MCF 10A (cell line): ENCODE measurements at regions of chr13 and their contacts with region 1.

Region 1: DNA sequence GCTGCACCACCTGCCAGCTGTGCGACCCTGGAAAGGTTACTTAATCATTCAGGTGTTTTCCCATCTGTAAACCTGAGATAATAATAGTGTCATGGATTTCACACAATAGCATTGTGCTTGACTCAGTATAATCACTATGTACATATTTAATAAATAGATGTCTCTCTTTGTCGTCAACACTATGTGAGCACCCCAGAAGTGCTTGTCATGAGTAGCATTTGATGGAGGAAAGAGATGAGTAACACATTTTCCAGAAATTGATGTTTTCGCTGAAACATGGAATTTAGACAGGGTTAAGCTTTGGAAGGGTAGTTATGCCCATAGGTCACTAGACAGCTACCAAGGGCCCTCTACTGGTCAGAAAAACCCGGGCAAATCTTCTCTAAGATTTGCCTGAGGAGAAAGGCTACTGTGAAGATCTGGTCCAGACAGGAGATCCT is 9.5 kb upstream of the MBNL2 start:
- DNase-seq: peak; percentile 75
- H3K4me3 Mint-ChIP-seq: no peak overlapping the region
- H3K27ac Mint-ChIP-seq: no peak overlapping the region
- H3K4me1 Mint-ChIP-seq: no peaks in the 10 kb centered on the region
- H3K27me3 Mint-ChIP-seq: no peaks in the 10 kb centered on the region
- CTCF ChIP-seq: peak; percentile 69

Region 2: GRCh38 chr13:97100821-97101220 is 111.8 kb before region 1 on chr13:
- CTCF ChIA-PET with region 1: interaction called, 478 read pairs
- POLR2A ChIA-PET with region 1: no interaction called
- intact Hi-C with region 1: no loop called
- DNase-seq: no peak
- H3K4me3 Mint-ChIP-seq: no peak overlapping the region
- H3K27ac Mint-ChIP-seq: no peak overlapping the region
- H3K4me1 Mint-ChIP-seq: no peaks in the 10 kb centered on the region
- H3K27me3 Mint-ChIP-seq: no peaks in the 10 kb centered on the region
- CTCF ChIP-seq: no peak

Region 3: GRCh38 chr13:97141564-97142005 is 71.0 kb before region 1 on chr13:
- CTCF ChIA-PET with region 1: interaction called, 20 read pairs
- POLR2A ChIA-PET with region 1: interaction called, 5 read pairs
- intact Hi-C with region 1: no loop called
- DNase-seq: peak; percentile 96
- H3K4me3 Mint-ChIP-seq: no peak overlapping the region
- H3K27ac Mint-ChIP-seq: peak overlapping the region; percentile 18
- H3K4me1 Mint-ChIP-seq: peaks cover 8% of the 10 kb centered on the region
- H3K27me3 Mint-ChIP-seq: peaks cover under 1% of the 10 kb centered on the region
- CTCF ChIP-seq: no peak

Region 4: DNA sequence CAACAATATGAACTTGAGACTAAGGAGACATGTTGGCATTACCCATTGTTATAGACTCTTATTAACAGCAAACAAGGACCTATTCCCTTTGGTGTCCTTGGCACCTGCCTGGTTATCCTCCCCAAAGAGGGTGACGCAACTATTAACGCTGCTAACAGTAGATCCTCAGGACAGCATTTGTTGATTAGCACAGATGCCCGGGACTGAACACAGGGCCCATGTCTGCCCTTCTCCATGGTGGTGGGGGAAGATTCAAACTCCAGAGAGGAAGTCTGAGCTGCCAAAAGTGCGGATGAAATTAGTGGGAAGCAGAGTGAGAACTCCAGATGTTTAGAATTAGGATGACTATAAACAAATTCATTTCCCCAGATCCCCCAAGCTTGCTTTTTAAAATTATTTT is 120.1 kb after region 1 on chr13:
- CTCF ChIA-PET with region 1: interaction called, 12 read pairs
- POLR2A ChIA-PET with region 1: no interaction called
- intact Hi-C with region 1: no loop called
- DNase-seq: no peak
- H3K4me3 Mint-ChIP-seq: no peak overlapping the region
- H3K27ac Mint-ChIP-seq: no peak overlapping the region
- H3K4me1 Mint-ChIP-seq: peaks cover 9% of the 10 kb centered on the region
- H3K27me3 Mint-ChIP-seq: no peaks in the 10 kb centered on the region
- CTCF ChIP-seq: no peak

Region 5: GRCh38 chr13:97359181-97360057 is 146.8 kb after region 1 on chr13:
- CTCF ChIA-PET with region 1: interaction called, 14 read pairs
- POLR2A ChIA-PET with region 1: no interaction called
- intact Hi-C with region 1: loop called (anchors 1 kb)
- DNase-seq: peak; percentile 87
- H3K4me3 Mint-ChIP-seq: no peak overlapping the region
- H3K27ac Mint-ChIP-seq: peak overlapping the region; percentile 49
- H3K4me1 Mint-ChIP-seq: no peaks in the 10 kb centered on the region
- H3K27me3 Mint-ChIP-seq: no peaks in the 10 kb centered on the region
- CTCF ChIP-seq: peak; percentile 96